Posterior cingulate gyrus (tissue), 11 donors: ENCODE measurements at regions of chr2 and their contacts with region 1.

Region 1: GRCh38 chr2:230160112-230160660 is 59.6 kb downstream of the SP110 start:
- DNase-seq: peak in 5 of 10 donors; percentile 29 to 86 (median 33)

Region 2: GRCh38 chr2:230007931-230008707 is 152.1 kb before region 1 on chr2:
- intact Hi-C with region 1: loop called (anchors 1 kb)
- DNase-seq: peak; percentile 52 to 95 (median 81)